ENCODE measurements at regions of chr9 and their contacts with region 1.

Region 1: DNA sequence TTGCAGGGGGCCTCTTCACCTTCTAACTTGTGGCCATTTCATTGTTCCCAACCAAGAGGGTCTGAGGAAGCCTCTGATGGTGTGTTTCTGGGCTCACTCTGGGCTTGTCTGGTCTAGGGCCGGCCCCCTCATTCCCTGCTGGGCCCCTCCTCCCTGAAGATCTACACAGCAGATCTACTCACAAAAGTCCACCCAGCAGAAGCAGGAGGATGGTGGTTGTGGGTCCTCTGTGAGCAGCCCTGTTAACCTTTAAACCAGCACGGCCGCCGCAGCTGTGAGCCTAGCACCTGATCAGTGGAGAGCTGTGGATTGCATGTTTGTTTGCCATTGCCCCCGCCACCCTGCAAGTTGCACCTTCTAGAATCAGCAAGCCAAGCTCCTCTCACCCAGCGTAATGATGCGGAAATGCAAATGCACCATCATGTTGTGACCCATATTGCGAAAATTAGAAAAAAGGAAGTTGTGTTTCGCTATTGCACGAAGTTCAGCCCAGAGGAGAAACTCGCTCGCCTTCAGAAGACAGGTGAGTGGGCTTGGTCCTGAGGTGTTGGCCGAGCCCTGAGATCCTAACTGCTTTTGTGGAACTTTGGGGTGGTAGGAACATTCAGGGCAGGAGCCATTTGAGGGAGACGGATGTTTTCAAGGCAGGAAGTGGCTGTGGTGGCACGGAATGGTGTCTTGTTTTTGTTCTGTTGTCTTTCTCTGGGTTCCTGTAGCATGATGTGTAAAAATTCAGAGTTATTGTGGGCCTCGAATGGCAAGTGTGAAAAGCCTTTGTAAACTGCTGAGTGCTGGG is 16.7 kb downstream of the FGD3 start:
- DNase-seq: peak; percentile 84
- H3K4me3 Mint-ChIP-seq: peak overlapping the region; percentile 85
- H3K27ac Mint-ChIP-seq: peak overlapping the region; percentile 98
- H3K4me1 Mint-ChIP-seq: peaks cover 63% of the 10 kb centered on the region
- H3K27me3 Mint-ChIP-seq: no peaks in the 10 kb centered on the region

Region 2: GRCh38 chr9:92607773-92608172 is 356.3 kb before region 1 on chr9:
- CTCF ChIA-PET with region 1: no interaction called
- POLR2A ChIA-PET with region 1: no interaction called
- DNase-seq: no peak
- H3K4me3 Mint-ChIP-seq: no peak overlapping the region
- H3K27ac Mint-ChIP-seq: no peak overlapping the region
- H3K4me1 Mint-ChIP-seq: no peaks in the 10 kb centered on the region
- H3K27me3 Mint-ChIP-seq: no peaks in the 10 kb centered on the region

Region 3: DNA sequence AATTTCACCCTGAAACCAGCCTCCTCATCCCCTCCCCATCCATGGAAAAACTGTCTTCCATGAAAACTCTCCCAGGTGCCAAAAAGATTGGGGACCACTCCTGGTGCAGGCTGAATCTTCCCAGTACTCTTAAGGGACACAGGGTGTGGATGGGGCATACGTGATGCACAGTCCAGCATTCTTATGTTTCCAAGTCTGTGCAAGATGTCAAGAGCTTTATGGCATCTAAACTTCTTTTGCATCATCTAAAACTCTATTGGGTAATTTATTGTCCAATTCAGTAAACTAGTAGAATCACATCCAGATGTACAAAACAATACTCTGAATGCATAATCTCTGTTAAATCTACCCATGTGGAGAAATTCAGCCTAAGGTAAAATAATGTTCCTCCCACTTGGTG is 26.0 kb before region 1 on chr9:
- CTCF ChIA-PET with region 1: no interaction called
- POLR2A ChIA-PET with region 1: no interaction called
- DNase-seq: no peak
- H3K4me3 Mint-ChIP-seq: no peak overlapping the region
- H3K27ac Mint-ChIP-seq: no peak overlapping the region
- H3K4me1 Mint-ChIP-seq: no peaks in the 10 kb centered on the region
- H3K27me3 Mint-ChIP-seq: peaks cover 6% of the 10 kb centered on the region

Region 4: DNA sequence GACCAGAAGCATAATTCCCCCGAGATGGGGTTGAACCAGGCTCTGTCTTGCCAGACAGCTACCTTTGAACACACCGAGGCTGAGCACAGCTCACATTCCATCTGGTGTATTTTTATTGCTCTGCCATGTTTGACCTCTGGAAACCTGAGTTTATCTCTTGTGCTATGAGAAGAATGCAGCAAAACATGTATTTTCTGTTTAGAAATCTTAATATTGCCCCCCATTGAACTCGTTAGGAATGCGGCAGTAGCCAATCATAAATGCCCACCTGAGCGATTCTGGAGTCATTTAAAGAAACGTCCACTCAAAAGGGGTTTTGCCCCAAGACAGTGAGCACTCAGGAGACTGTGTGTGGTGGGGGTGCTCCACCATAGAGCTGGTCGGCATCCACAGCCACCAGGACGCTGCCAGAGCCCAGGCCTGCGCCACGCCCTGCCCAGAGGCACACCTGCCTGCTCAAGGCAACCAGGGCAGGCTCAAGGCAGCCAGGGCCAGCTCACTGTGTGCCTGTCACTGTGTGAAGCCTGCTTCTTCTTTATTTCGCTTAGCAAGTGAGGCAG is 10.2 kb after region 1 on chr9:
- CTCF ChIA-PET with region 1: no interaction called
- POLR2A ChIA-PET with region 1: interaction called, 19 read pairs
- DNase-seq: no peak
- H3K4me3 Mint-ChIP-seq: no peak overlapping the region
- H3K27ac Mint-ChIP-seq: no peak overlapping the region
- H3K4me1 Mint-ChIP-seq: peaks cover 80% of the 10 kb centered on the region
- H3K27me3 Mint-ChIP-seq: no peaks in the 10 kb centered on the region

Region 5: DNA sequence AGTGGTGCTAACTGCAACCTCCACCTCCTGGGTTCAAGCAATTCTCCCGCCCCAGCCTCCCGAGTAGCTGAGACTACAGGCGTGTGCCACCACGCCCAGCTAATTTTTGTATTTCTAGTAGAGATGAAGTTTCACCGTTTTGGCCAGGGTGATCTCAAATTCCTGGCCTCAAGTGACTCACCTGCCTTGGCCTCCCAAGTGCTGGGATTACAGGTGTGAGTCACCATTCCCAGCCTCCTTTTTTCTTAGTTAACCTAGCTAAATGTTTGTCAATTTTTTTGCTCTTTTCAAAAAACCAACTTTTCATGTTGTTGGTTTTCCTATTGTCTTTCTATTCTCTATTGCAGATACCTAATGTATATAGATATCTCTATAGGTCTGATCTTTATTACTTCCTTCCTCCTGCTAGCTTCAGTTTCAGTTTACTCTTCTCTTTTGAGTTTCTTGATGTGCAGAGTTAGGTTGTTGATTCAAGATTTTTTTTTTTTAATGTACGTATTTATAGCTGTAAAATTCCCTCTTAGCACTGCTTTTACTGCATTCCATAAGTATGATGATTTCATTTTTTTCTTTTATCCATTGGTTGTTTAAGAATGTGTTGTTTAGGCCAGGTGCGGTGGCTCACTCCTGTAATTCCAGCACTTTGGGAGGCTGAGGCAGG is 16.2 kb after region 1 on chr9:
- CTCF ChIA-PET with region 1: interaction called, 3 read pairs
- POLR2A ChIA-PET with region 1: interaction called, 19 read pairs
- DNase-seq: no peak
- H3K4me3 Mint-ChIP-seq: peak overlapping the region; percentile 45
- H3K27ac Mint-ChIP-seq: peak overlapping the region; percentile 87
- H3K4me1 Mint-ChIP-seq: peaks cover 58% of the 10 kb centered on the region
- H3K27me3 Mint-ChIP-seq: no peaks in the 10 kb centered on the region

Region 6: DNA sequence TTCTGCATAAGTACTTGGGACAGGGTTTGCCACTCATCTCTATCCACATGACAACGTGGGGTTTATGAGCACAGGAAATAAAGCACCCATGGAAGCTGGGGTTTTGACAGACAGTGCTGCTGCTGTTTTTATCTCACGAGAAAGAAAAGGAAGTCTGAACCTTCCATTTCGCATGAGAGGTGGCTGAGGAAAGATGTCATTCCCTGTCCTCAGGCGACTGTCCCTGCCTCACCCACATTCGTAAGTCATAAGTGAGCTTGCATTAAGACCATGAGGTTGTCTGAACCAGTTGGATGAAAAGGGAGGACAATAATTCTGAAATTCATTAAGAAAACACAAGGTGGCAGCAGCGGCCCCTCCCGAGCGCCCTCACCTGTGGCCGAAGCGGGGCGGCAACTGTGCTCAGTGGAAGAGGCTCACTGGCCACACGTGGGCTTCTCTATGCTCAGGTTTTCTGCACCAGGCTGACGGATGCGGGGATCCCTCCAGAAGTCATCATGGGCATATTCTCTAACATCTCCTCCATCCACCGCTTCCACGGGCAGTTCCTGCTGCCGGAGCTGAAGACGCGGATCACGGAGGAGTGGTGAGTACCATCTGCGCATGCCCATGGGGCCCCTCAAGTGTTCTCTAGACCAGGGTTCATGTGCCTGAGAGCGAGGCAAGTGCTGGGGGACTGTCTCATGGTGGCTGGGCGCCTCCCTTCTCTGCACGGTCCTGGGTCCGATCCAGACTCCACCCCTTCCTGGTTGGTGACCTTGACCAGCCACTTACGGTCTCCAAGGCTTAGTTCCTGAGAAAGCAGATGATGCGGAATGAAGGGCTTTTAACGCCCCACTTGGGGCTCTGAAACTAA is 39.8 kb after region 1 on chr9:
- CTCF ChIA-PET with region 1: interaction called, 5 read pairs
- POLR2A ChIA-PET with region 1: interaction called, 12 read pairs
- DNase-seq: peak; percentile 68
- H3K4me3 Mint-ChIP-seq: no peak overlapping the region
- H3K27ac Mint-ChIP-seq: peak overlapping the region; percentile 78
- H3K4me1 Mint-ChIP-seq: peaks cover 46% of the 10 kb centered on the region
- H3K27me3 Mint-ChIP-seq: no peaks in the 10 kb centered on the region

Region 7: GRCh38 chr9:93058355-93059096 is 94.5 kb after region 1 on chr9 and contains the start of gene SUSD3:
- CTCF ChIA-PET with region 1: no interaction called
- POLR2A ChIA-PET with region 1: interaction called, 27 read pairs
- DNase-seq: peak; percentile 77
- H3K4me3 Mint-ChIP-seq: peak within 1 kb of the TSS; percentile 92
- H3K27ac Mint-ChIP-seq: peak within 1 kb of the TSS; percentile 83
- H3K4me1 Mint-ChIP-seq: peaks cover 63% of the 10 kb centered on the region
- H3K27me3 Mint-ChIP-seq: no peaks in the 10 kb centered on the region
- total RNA-seq, gene SUSD3: 69.6 to 71.4 TPM

Region 8: GRCh38 chr9:93095205-93096130 is 131.4 kb after region 1 on chr9:
- CTCF ChIA-PET with region 1: interaction called, 3 read pairs
- POLR2A ChIA-PET with region 1: interaction called, 10 read pairs
- DNase-seq: peak; percentile 100
- H3K4me3 Mint-ChIP-seq: peak overlapping the region; percentile 76
- H3K27ac Mint-ChIP-seq: peak overlapping the region; percentile 96
- H3K4me1 Mint-ChIP-seq: peaks cover 78% of the 10 kb centered on the region
- H3K27me3 Mint-ChIP-seq: no peaks in the 10 kb centered on the region

Region 9: GRCh38 chr9:93198107-93198837 is 234.2 kb after region 1 on chr9:
- CTCF ChIA-PET with region 1: no interaction called
- POLR2A ChIA-PET with region 1: no interaction called
- DNase-seq: no peak
- H3K4me3 Mint-ChIP-seq: no peak overlapping the region
- H3K27ac Mint-ChIP-seq: no peak overlapping the region
- H3K4me1 Mint-ChIP-seq: no peaks in the 10 kb centered on the region
- H3K27me3 Mint-ChIP-seq: peaks cover 16% of the 10 kb centered on the region